ENCODE measurements at regions of chrX and their contacts with region 1.

Region 1: GRCh38 chrX:42615161-42615563 is 162.8 kb downstream of the PPP1R2C start:
- DNase-seq: no peak
- H3K4me3 ChIP-seq: no peak overlapping the region
- H3K27ac ChIP-seq: no peak overlapping the region
- H3K4me1 ChIP-seq: no peaks in the 10 kb centered on the region
- H3K27me3 ChIP-seq: peaks cover 0 to 10% of the 10 kb centered on the region in 2 donors
- CTCF ChIP-seq: no peak
- POLR2A ChIP-seq: no peak

Region 2: DNA sequence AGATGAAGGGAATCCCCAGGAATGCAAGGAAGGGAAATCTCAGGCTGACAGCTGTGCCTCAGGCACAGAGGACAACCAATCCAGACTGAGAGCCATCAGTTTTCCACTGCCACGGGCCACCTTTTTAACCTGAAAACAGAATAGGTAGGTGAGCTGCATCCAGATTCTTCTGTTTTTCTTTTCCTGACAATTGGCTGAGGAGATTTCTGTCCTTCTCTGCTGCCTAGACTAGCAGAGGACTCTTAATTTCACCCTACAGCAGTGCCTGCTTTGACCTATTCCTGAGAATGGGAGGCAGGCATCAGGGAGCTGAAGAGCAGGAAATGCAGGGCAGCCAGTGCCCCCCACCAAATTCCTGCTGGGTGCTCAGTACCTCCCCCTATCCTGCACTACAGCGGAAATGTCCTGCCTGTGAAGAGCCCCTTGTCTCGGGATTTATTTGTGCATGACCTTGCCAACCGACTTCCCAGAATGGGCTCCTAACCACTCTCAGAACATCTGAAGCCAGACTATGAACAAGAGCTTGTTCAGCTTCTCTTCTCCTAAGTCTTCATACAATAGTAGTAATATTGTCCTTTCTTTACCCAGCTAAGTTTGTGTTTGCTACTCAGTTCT is 756.9 kb before region 1 on chrX:
- intact Hi-C with region 1: loop called (anchors 5 kb)
- DNase-seq: no peak
- H3K4me3 ChIP-seq: no peak overlapping the region
- H3K27ac ChIP-seq: no peak overlapping the region
- H3K4me1 ChIP-seq: no peaks in the 10 kb centered on the region
- H3K27me3 ChIP-seq: peaks cover 0 to 19% of the 10 kb centered on the region in 2 donors
- CTCF ChIP-seq: no peak
- POLR2A ChIP-seq: no peak